GM10248 (cell line): ENCODE measurements at regions of chr1 and their contacts with region 1.

Region 1: GRCh38 chr1:171644805-171645483 is 7.5 kb downstream of the MYOC start:
- DNase-seq: peak; percentile 58
- CTCF ChIP-seq: peak; percentile 82

Region 2: DNA sequence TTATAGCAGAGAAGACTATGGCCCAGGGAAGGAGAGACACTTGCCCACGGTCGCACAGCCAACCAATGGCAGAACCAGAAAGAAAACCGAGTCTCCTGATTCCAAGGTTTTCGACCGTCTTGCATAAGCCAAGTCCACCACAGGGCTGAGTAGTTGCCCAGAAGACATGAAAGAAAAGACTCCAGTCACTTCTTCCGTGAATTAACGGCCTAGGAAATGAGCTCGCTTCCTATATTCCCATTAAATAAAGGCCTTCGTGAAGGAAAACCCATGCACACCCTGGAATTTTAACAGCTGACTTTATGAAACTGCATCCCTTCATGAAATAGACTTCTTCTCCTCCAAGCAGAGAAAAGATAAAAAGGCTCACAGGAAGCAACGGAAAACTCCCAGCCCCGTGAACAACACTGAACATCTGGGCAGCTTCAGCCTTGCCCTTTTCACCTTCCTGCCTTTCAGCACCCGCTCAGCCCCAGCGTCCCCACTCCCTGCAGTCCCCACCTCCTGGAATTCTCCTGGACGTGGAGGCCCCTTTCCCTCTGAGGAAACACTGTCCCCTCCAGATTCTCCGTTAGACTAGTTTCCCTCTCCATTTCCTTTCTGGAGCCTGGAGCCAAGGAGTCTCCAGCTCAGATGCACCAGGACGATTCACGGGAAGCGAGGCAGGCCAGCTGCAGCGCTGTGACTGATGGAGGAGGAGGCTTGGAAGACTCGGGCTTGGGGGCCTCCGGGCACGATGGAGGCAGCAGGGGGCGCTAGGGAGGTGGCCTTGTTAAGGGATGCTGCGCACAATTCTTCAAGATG is 10.2 kb after region 1 on chr1:
- CTCF ChIA-PET with region 1: interaction called, 62 read pairs
- POLR2A ChIA-PET with region 1: no interaction called
- DNase-seq: peak; percentile 74
- CTCF ChIP-seq: peak; percentile 65

Region 3: GRCh38 chr1:171715813-171716251 is 70.9 kb after region 1 on chr1:
- CTCF ChIA-PET with region 1: interaction called, 18 read pairs
- POLR2A ChIA-PET with region 1: no interaction called
- DNase-seq: no peak
- CTCF ChIP-seq: peak; percentile 41

Region 4: DNA sequence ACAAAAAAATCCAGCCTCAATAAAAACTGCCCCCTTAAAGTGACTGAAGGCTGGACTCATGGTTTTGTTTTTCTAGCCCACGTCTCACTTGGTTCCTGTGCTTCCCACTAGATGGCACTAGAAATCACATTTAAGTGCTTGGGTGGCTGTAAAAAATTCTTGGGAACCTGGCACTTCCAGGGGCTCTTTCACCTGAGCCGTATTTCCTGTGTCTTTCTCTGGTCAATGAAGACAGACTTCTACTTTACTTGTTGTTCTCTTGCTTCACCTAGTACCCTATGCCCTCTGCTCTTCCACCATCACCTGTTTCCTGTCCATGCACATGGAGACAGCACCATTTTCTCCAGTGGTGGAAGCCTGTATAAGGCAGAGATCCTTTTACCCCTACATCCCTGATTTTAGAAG is 156.5 kb after region 1 on chr1:
- CTCF ChIA-PET with region 1: interaction called, 16 read pairs
- POLR2A ChIA-PET with region 1: no interaction called
- DNase-seq: peak; percentile 48
- CTCF ChIP-seq: peak; percentile 80